ENCODE measurements at regions of chr6 and their contacts with region 1.

Region 1: GRCh38 chr6:32439602-32440214 is at the start of gene HLA-DRA:
- DNase-seq: peak; percentile 17
- H3K4me3 ChIP-seq: no peak within 1 kb of the TSS
- H3K27ac ChIP-seq: no peak within 1 kb of the TSS
- H3K4me1 ChIP-seq: no peaks in the 10 kb centered on the region
- H3K27me3 ChIP-seq: no peaks in the 10 kb centered on the region
- CTCF ChIP-seq: no peak
- total RNA-seq, gene HLA-DRA: 0.67 TPM in 1 of 2 donors, not detected in the other

Region 2: DNA sequence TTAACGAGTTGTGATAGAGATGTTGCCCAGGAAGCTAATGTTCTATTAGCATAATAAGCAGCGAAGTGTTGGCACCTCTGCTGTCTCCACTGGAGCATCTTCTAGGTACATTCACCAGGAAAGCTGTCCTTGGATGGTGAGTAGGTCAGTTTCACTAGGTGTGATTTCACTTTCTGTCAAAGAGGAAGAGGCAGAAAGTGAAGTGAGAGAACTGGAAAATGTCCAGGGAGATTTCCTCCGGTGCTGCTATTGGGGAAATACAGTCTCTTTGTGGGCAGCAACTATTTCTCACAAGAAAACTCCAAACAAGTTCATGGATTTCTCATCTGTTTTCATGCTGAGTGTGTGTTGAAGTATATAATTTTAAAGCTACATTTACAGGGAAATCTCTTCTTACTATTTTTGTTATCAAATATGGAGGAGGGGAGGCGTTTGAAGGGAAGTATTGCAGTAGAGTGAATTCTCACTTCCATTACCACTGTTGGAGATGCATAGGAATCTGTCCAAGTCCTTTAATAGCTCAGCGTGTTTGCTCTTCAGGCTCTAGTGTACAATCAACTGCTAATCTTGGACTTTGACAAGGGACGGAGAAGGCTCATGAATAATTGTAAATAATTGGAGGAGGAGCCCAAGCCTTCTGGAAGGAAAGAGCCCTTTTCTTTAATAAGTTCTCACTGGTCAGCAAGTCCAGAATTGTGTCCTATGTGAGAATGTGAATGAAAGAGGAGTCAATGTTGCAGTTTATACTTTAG is 51.9 kb before region 1 on chr6:
- CTCF ChIA-PET with region 1: no interaction called
- dilution Hi-C with region 1: no loop called
- in situ Hi-C with region 1: no loop called
- intact Hi-C with region 1: no loop called
- DNase-seq: no peak
- H3K4me3 ChIP-seq: no peak overlapping the region
- H3K27ac ChIP-seq: no peak overlapping the region
- H3K4me1 ChIP-seq: no peaks in the 10 kb centered on the region
- H3K27me3 ChIP-seq: no peaks in the 10 kb centered on the region
- CTCF ChIP-seq: no peak

Region 3: GRCh38 chr6:32752580-32752979 is 312.9 kb after region 1 on chr6:
- CTCF ChIA-PET with region 1: no interaction called
- dilution Hi-C with region 1: loop called (anchors 25 kb)
- in situ Hi-C with region 1: no loop called
- intact Hi-C with region 1: no loop called
- DNase-seq: peak; percentile 69
- H3K4me3 ChIP-seq: no peak overlapping the region
- H3K27ac ChIP-seq: no peak overlapping the region
- H3K4me1 ChIP-seq: no peaks in the 10 kb centered on the region
- H3K27me3 ChIP-seq: no peaks in the 10 kb centered on the region
- CTCF ChIP-seq: no peak

Measured in mammary epithelial cell (primary cell).